Sigmoid colon (tissue), 7 donors: ENCODE measurements at regions of chr11 and their contacts with region 1.

Region 1: GRCh38 chr11:102268329-102269193 is 48.7 kb upstream of the BIRC3 start:
- DNase-seq: peak; percentile 85
- H3K4me3 ChIP-seq: peak overlapping the region; percentile 29 to 43 (median 40)
- H3K27ac ChIP-seq: peak overlapping the region in 3 of 4 donors; percentile 17 to 54 (median 50)
- H3K4me1 ChIP-seq: peaks cover 0 to 16% (median 9%) of the 10 kb centered on the region in 4 donors
- H3K27me3 ChIP-seq: no peaks in the 10 kb centered on the region
- CTCF ChIP-seq: peak in 1 of 4 experiments; percentile 33
- EP300 ChIP-seq: no peak
- POLR2A ChIP-seq: no peak

Region 2: DNA sequence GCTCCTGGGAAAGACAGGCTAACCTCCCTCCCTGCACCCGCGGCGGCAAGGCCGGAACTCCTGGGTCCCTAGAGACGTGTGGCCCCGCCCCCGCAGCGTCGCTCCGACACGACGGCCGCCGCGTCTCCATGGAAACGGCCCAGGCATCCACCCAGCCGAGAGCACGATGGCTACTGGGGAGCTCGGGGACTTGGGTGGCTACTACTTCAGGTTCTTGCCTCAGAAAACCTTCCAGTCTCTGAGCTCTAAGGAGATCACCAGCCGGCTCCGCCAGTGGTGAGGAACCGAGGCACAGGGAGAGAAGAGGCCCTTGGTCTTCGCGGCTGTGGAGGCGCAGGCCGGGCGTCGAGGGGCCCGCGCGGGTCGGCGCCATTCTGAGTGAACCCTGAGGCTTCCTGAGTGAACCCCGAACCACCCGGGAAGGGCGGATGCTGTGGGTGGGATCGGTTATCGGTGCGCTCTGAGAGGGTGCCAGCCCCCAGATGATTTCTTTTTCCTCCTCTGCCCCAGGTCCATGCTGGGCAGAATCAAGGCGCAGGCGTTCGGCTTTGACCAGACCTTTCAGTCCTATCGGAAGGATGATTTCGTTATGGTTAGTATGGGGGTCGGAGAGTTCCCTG is 221.1 kb before region 1 on chr11 and contains the start of gene CFAP300:
- intact Hi-C with region 1: loop called (anchors 5 kb)
- DNase-seq: peak; percentile 94
- H3K4me3 ChIP-seq: peak within 1 kb of the TSS; percentile 46 to 62 (median 58)
- H3K27ac ChIP-seq: peak within 1 kb of the TSS; percentile 61 to 78 (median 67)
- H3K4me1 ChIP-seq: peaks cover 0 to 10% (median 5%) of the 10 kb centered on the region in 4 donors
- H3K27me3 ChIP-seq: no peaks in the 10 kb centered on the region
- CTCF ChIP-seq: no peak
- EP300 ChIP-seq: no peak
- POLR2A ChIP-seq: no peak
- total RNA-seq, gene CFAP300: 2.0 to 15.0 (median 4.0) TPM

Region 3: GRCh38 chr11:102223859-102224258 is 44.7 kb before region 1 on chr11:
- intact Hi-C with region 1: loop called (anchors 5 kb)
- DNase-seq: no peak
- H3K4me3 ChIP-seq: no peak overlapping the region
- H3K27ac ChIP-seq: peak overlapping the region in 2 of 4 donors; percentile 7 to 13
- H3K4me1 ChIP-seq: peaks cover 0 to 17% (median 0%) of the 10 kb centered on the region in 4 donors
- H3K27me3 ChIP-seq: no peaks in the 10 kb centered on the region
- CTCF ChIP-seq: no peak
- EP300 ChIP-seq: no peak
- POLR2A ChIP-seq: no peak

Region 4: DNA sequence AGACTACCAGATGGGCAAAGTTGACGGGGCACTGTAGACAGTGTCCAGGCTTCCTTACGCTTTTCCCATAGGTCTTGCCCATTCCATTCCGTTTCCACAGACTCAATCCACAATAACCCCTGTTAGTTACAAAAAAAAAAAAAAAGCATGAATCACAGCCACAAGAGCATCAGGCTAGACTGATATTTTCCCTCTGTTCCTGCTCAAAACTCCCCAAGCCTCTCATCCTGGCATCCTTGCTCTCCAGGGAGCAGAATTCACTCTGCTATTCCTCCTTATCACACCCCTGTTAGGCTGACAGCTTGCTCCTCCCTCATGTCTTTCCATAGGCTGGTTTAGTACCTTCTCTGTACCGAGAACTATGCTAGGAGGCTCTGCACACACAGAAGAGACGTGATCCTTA is 141.8 kb after region 1 on chr11:
- intact Hi-C with region 1: no loop called
- DNase-seq: no peak
- H3K4me3 ChIP-seq: no peak overlapping the region
- H3K27ac ChIP-seq: peak overlapping the region in 2 of 4 donors; percentile 18 to 27
- H3K4me1 ChIP-seq: peaks cover 0 to 30% (median 26%) of the 10 kb centered on the region in 4 donors
- H3K27me3 ChIP-seq: no peaks in the 10 kb centered on the region
- CTCF ChIP-seq: no peak
- EP300 ChIP-seq: no peak
- POLR2A ChIP-seq: no peak